Common myeloid progenitor, CD34-positive (primary cell): ENCODE measurements at regions of chr4 and their contacts with region 1.

Region 1: GRCh38 chr4:53714236-53715140 is 123.2 kb upstream of the LNX1 start:
- DNase-seq: no peak
- H3K4me3 ChIP-seq: no peak overlapping the region
- H3K27ac ChIP-seq: no peak overlapping the region
- H3K4me1 ChIP-seq: peaks cover 0 to 13% (median 9%) of the 10 kb centered on the region in 4 experiments
- H3K27me3 ChIP-seq: no peaks in the 10 kb centered on the region

Region 2: GRCh38 chr4:53702334-53703266 is 11.9 kb before region 1 on chr4:
- CTCF ChIA-PET with region 1: interaction called, 24 read pairs
- POLR2A ChIA-PET with region 1: interaction called, 3 read pairs
- DNase-seq: peak; percentile 23 to 78 (median 64)
- H3K4me3 ChIP-seq: peak overlapping the region in 6 of 7 experiments; percentile 3 to 70 (median 44)
- H3K27ac ChIP-seq: peak overlapping the region in 1 of 2 experiments; percentile 7
- H3K4me1 ChIP-seq: peaks cover 2 to 20% (median 15%) of the 10 kb centered on the region in 4 experiments
- H3K27me3 ChIP-seq: no peaks in the 10 kb centered on the region